ENCODE measurements at regions of chr17 and their contacts with region 1.

Region 1: GRCh38 chr17:79045842-79046196 is 21.9 kb downstream of the C1QTNF1 start:
- DNase-seq: peak; percentile 81
- ATAC-seq: peak; percentile 95
- H3K4me3 Mint-ChIP-seq: no peak overlapping the region
- H3K27ac Mint-ChIP-seq: no peak overlapping the region
- H3K4me1 Mint-ChIP-seq: no peaks in the 10 kb centered on the region
- H3K27me3 Mint-ChIP-seq: peaks cover 7% of the 10 kb centered on the region

Region 2: DNA sequence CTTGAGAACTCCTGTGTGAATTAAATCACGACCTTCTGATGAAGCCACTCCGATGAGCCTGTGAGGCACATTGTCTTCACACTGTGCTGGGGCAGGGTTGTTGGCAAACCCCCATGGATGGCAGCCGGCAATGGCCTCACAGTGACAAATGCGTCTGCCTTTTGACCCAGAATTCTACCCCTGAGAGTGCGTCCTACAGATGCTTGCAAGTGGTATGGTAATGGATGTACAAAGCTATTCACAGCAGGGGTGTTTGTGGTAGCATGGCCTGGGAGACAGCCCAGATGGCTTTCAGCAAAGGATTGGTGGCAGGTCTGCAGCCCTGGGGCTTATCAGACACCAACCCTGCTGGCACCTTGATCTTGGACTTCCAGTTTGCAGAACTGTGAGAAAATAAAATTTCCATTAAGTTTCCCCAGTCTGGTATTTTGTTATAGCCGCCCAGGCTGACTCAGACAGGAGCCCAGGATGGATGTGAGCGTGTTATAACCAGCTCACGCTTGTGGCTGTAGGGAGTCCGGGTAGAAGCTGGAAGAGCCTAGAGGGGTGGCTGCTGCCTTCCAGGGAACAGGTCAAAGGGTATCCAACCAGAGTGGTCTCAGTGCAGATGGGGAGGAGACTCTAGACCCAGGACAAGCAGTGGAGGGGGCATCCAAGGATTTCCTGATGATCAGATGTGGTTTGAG is 848.5 kb before region 1 on chr17:
- CTCF ChIA-PET with region 1: no interaction called
- POLR2A ChIA-PET with region 1: no interaction called
- intact Hi-C with region 1: no loop called
- DNase-seq: no peak
- ATAC-seq: no peak
- H3K4me3 Mint-ChIP-seq: no peak overlapping the region
- H3K27ac Mint-ChIP-seq: no peak overlapping the region
- H3K4me1 Mint-ChIP-seq: peaks cover 5% of the 10 kb centered on the region
- H3K27me3 Mint-ChIP-seq: no peaks in the 10 kb centered on the region

Region 3: GRCh38 chr17:78986048-78986648 is 59.7 kb before region 1 on chr17:
- CTCF ChIA-PET with region 1: no interaction called
- POLR2A ChIA-PET with region 1: no interaction called
- intact Hi-C with region 1: loop called in 1 of 2 experiments (anchors 1 kb)
- DNase-seq: peak; percentile 46
- ATAC-seq: peak; percentile 76
- H3K4me3 Mint-ChIP-seq: no peak overlapping the region
- H3K27ac Mint-ChIP-seq: no peak overlapping the region
- H3K4me1 Mint-ChIP-seq: peaks cover 18% of the 10 kb centered on the region
- H3K27me3 Mint-ChIP-seq: no peaks in the 10 kb centered on the region

Region 4: DNA sequence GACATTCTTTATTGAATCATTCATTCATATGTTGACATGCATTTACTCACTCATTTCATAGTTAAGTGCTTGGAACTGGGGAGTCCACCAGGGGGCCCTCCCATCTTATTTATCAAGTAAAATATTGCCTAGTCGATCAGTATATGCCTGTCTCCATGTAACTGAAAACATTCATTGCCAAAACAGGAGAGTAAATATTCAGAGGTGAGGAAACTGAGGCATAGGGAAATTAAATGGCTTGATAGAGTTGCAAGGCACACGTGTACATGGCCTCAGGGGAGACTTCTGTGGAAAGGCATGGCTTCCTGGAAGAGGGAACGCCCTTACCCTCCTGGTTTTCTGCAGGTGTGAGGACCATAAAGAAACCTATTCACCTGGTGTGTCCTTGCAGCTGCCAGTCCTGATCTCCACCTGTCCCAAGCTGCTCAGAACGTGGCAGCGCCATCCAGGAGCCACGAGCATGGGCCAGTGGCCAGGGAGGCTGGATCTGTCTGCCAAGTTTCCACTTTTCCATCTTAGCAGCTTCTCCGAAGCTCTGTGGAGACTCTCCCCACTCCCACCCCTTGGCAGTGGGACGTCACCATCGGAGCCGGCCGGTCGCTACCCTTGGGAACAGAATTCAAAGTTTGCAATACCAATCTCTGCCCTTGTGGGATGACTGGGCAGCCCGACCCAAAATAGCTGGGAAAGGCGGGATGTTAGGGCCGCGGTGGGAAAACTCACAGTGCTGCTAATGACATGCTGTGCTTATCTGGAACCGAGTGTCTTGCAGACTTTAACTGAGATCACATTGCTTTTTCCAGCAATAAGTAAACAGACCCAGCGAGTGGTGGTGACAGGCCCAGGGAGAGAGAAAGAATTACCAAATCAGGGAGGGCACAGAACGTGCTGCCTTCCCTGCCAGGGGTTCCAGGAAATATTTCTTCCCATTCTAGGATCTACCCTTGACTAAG is 25.9 kb before region 1 on chr17:
- CTCF ChIA-PET with region 1: interaction called, 4 read pairs
- POLR2A ChIA-PET with region 1: no interaction called
- intact Hi-C with region 1: loop called in 1 of 2 experiments (anchors 1 kb)
- DNase-seq: peak; percentile 74
- ATAC-seq: peak; percentile 68
- H3K4me3 Mint-ChIP-seq: no peak overlapping the region
- H3K27ac Mint-ChIP-seq: no peak overlapping the region
- H3K4me1 Mint-ChIP-seq: peaks cover 3% of the 10 kb centered on the region
- H3K27me3 Mint-ChIP-seq: peaks cover 23% of the 10 kb centered on the region

Region 5: GRCh38 chr17:79082311-79083190 is 36.7 kb after region 1 on chr17:
- CTCF ChIA-PET with region 1: interaction called, 5 read pairs
- POLR2A ChIA-PET with region 1: no interaction called
- intact Hi-C with region 1: loop called (anchors 1 to 5 kb)
- DNase-seq: peak; percentile 67
- ATAC-seq: peak; percentile 67
- H3K4me3 Mint-ChIP-seq: no peak overlapping the region
- H3K27ac Mint-ChIP-seq: no peak overlapping the region
- H3K4me1 Mint-ChIP-seq: no peaks in the 10 kb centered on the region
- H3K27me3 Mint-ChIP-seq: no peaks in the 10 kb centered on the region

Region 6: DNA sequence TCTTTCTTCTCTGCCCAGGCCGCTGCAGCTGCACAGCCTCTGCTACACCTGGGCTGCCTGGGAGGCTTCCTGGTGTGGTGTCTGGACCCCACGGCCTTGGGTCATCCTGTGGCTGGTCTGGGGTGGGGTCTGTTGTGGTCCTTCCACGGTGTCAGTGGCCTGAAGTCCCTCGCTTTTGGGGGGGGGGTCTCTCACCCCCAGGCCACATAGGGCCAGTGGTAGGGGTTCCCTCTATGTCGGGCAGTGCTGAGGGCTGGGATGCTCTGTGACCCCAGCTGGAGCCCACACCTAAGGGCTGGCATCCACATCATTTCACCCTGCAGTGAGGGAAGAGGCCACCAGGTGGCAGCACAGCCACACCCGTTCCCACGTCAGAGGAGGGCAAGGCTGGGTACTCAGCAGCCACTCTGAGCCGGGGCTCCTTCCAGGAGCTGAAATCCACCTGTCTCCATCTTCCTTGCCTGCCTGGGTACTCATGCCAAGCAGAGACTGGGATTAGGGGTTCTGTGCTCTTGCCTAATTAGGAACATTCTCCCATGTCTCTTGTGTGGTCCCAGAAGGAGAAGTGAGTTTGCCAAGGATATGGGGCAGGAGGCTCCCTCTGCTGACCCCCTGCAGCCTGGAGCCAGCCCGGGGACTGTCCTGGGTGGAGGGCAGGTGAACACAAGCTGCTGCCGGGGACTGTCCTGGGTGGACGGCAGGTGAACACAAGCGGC is 41.8 kb after region 1 on chr17:
- CTCF ChIA-PET with region 1: interaction called, 5 read pairs
- POLR2A ChIA-PET with region 1: no interaction called
- intact Hi-C with region 1: loop called (anchors 1 to 5 kb)
- DNase-seq: peak; percentile 86
- ATAC-seq: peak; percentile 91
- H3K4me3 Mint-ChIP-seq: no peak overlapping the region
- H3K27ac Mint-ChIP-seq: no peak overlapping the region
- H3K4me1 Mint-ChIP-seq: no peaks in the 10 kb centered on the region
- H3K27me3 Mint-ChIP-seq: peaks cover 5% of the 10 kb centered on the region

Region 7: DNA sequence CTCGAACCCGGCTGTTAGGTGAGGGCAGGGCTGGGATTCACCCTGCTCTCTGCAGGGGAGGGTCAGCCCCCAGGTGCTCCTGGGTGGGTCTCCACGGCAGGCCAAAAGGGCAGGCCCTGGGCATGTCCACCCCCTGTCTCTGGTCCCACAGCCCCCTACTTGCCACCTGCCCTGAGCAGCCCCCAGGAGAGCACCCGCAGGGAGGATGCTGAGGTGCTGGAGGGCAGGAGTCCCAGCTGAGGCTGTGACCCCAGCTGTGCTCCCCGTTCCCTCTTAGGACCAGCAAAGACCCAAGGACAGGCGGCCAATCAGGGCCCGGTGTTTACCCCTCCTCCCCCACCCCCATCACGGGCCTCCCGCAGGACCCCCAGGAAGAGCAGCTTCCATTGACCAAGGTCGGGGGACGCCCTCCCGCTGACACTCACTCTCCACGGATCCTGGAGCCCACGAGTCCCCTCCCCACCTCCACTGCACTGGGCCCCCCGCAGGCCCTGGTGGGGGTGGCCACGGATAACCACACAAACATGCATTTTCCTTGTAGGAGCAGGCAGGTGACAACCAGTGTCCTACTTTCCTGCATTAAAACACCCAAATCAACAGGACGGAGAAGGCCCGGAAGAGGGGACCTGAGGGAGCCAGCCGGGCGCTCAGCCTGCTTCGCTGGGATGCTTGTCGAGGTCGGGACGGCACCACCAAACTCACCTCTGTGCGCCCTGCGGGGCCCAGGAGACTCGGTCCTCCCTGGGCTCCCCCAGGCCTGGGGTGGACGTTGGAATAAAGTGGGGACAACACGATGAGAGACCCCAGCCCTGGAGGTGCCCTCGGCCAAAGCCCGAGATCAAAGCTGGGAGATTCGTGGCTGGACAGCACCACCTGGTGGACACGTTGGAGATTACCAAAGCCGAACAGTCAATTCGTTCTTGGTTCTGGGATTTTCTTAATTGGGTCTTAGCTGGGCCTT is 662.4 kb after region 1 on chr17:
- CTCF ChIA-PET with region 1: interaction called, 3 read pairs
- POLR2A ChIA-PET with region 1: no interaction called
- intact Hi-C with region 1: loop called in 1 of 2 experiments (anchors 5 kb)
- DNase-seq: peak; percentile 77
- ATAC-seq: peak; percentile 73
- H3K4me3 Mint-ChIP-seq: peak overlapping the region; percentile 21
- H3K27ac Mint-ChIP-seq: no peak overlapping the region
- H3K4me1 Mint-ChIP-seq: no peaks in the 10 kb centered on the region
- H3K27me3 Mint-ChIP-seq: no peaks in the 10 kb centered on the region